WTC11 (cell line): ENCODE measurements at regions of chr5 and their contacts with region 1.

Region 1: DNA sequence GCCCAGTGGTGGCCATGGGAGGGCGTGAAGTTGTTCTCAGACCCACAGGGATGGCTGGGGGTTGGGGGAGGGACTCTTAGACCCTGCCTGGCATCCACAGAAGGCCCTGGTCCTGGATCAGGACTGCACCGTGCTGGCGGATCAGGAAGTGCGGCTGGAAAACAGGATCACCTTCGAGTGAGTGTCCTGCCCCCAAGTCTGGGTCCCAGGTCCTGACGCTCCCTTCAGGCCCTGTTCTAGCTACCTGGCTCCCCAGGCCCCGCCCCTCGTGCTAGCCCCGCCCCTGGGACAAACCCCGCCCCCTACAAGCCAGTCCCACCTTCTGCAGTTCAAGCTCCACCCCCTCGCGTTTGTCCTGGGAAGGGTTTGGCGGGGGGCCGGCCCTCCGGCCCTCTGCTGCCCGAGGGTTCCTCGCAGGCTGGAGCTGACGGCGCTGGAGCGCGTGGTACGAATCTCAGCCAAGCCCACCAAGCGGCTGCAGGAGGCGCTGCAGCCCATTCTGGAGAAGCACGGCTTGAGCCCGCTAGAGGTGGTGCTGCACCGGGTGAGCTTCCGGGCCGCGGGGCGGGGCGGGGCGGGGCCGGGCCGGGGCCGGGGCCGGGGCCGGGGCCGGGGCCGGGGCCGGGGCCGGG is 12.9 kb downstream of the RGS14 start:
- DNase-seq: peak; percentile 99
- ATAC-seq: peak; percentile 78
- H3K4me3 Mint-ChIP-seq: peak overlapping the region; percentile 49
- H3K27ac Mint-ChIP-seq: peak overlapping the region; percentile 76
- H3K4me1 Mint-ChIP-seq: peaks cover 56% of the 10 kb centered on the region
- H3K27me3 Mint-ChIP-seq: peaks cover 5% of the 10 kb centered on the region
- CTCF ChIP-seq: peak; percentile 45; the same call in 1 of the 2 replicates

Region 2: DNA sequence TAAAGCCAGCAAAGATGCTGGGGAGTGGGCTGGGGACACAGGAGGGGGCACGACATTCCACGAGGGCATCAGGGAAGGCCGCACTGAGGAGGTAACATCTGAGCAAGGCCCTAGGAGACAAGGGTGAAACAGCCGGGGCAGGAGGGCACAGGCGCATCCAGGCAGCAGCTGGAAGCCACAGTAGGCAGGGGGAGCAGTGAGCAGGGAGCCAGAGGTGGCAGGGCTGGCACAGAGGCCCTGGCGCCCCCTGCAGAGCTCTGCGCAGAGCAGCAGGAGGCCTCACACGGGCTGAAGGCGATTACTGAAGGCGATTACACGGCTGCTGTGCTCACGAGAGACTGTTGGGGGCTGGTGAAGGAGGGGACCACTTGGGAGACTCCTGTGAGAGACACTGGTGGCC is 34.5 kb before region 1 on chr5:
- CTCF ChIA-PET with region 1: interaction called, 15 read pairs
- POLR2A ChIA-PET with region 1: interaction called, 3 read pairs
- DNase-seq: no peak
- ATAC-seq: peak; percentile 5
- H3K4me3 Mint-ChIP-seq: no peak overlapping the region
- H3K27ac Mint-ChIP-seq: peak overlapping the region; percentile 97
- H3K4me1 Mint-ChIP-seq: peaks cover 41% of the 10 kb centered on the region
- H3K27me3 Mint-ChIP-seq: no peaks in the 10 kb centered on the region
- CTCF ChIP-seq: no peak

Region 3: GRCh38 chr5:177382423-177383029 is 11.9 kb after region 1 on chr5:
- CTCF ChIA-PET with region 1: interaction called, 130 read pairs
- POLR2A ChIA-PET with region 1: interaction called, 4 read pairs
- DNase-seq: peak; percentile 46
- ATAC-seq: peak; percentile 70
- H3K4me3 Mint-ChIP-seq: no peak overlapping the region
- H3K27ac Mint-ChIP-seq: no peak overlapping the region
- H3K4me1 Mint-ChIP-seq: peaks cover 17% of the 10 kb centered on the region
- H3K27me3 Mint-ChIP-seq: peaks cover 18% of the 10 kb centered on the region
- CTCF ChIP-seq: no peak

Region 4: GRCh38 chr5:177403792-177404640 is 33.4 kb after region 1 on chr5:
- CTCF ChIA-PET with region 1: interaction called, 114 read pairs
- POLR2A ChIA-PET with region 1: interaction called, 4 read pairs
- DNase-seq: peak; percentile 75
- ATAC-seq: peak; percentile 26
- H3K4me3 Mint-ChIP-seq: peak overlapping the region; percentile 84
- H3K27ac Mint-ChIP-seq: no peak overlapping the region
- H3K4me1 Mint-ChIP-seq: peaks cover 9% of the 10 kb centered on the region
- H3K27me3 Mint-ChIP-seq: peaks cover 83% of the 10 kb centered on the region
- CTCF ChIP-seq: no peak

Region 5: GRCh38 chr5:177446200-177447065 is 75.8 kb after region 1 on chr5 and contains the start of gene PRR7:
- CTCF ChIA-PET with region 1: interaction called, 87 read pairs
- POLR2A ChIA-PET with region 1: interaction called, 5 read pairs
- DNase-seq: peak; percentile 60
- ATAC-seq: peak; percentile 14
- H3K4me3 Mint-ChIP-seq: peak within 1 kb of the TSS; percentile 66
- H3K27ac Mint-ChIP-seq: no peak within 1 kb of the TSS
- H3K4me1 Mint-ChIP-seq: peaks cover 44% of the 10 kb centered on the region
- H3K27me3 Mint-ChIP-seq: peaks cover 41% of the 10 kb centered on the region
- CTCF ChIP-seq: no peak
- total RNA-seq, gene PRR7: 13.1 to 14.7 TPM (median 14.6 TPM) in 3 replicates

Region 6: DNA sequence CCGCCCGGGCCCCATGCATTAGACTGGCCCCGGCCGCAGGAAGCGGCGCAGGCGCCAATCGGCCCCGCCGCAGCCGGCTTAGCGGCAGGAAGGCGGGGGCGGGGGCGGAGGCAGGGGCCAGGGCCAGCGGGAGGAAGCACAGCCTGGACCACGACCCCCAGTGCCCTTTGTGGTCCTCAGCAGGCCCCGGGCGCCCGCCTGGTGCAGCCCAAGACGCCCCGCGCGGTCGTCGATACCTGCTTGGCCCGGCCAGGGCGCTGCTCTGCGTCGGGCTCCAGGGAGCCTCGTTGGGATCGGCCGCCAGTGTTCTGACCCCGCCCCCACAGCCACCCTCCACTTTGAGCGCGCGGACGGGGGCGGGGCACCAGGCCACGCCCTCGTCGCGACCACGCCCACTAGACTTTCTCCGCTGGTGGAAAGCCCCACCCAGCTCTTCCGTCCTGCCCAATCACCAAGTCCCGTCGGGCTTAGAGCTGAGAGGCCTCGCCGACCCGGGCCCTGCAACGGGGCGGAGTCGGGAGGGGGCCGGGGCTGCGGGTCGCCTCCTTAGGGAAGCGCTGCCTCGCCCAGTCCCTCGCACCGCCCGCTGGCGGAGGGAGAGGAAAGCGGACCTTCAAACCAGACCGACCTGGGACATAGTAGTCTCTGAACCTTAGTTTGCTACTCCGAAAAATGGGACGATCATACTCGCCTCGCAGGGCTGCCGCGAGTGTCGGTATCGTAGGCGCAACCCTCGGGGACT is 126.9 kb after region 1 on chr5 and contains the start of gene PDLIM7:
- CTCF ChIA-PET with region 1: interaction called, 17 read pairs
- POLR2A ChIA-PET with region 1: interaction called, 4 read pairs
- DNase-seq: peak; percentile 97
- ATAC-seq: peak; percentile 71
- H3K4me3 Mint-ChIP-seq: peak within 1 kb of the TSS; percentile 80
- H3K27ac Mint-ChIP-seq: peak within 1 kb of the TSS; percentile 92; the same call in 1 of the 2 replicates
- H3K4me1 Mint-ChIP-seq: peaks cover 36% of the 10 kb centered on the region
- H3K27me3 Mint-ChIP-seq: peaks cover 31% of the 10 kb centered on the region
- CTCF ChIP-seq: no peak
- total RNA-seq, gene PDLIM7: 124 to 142 TPM (median 139 TPM) in 3 replicates